Ascending aorta (tissue), 2 donors: ENCODE measurements at regions of chr4 and their contacts with region 1.

Region 1: DNA sequence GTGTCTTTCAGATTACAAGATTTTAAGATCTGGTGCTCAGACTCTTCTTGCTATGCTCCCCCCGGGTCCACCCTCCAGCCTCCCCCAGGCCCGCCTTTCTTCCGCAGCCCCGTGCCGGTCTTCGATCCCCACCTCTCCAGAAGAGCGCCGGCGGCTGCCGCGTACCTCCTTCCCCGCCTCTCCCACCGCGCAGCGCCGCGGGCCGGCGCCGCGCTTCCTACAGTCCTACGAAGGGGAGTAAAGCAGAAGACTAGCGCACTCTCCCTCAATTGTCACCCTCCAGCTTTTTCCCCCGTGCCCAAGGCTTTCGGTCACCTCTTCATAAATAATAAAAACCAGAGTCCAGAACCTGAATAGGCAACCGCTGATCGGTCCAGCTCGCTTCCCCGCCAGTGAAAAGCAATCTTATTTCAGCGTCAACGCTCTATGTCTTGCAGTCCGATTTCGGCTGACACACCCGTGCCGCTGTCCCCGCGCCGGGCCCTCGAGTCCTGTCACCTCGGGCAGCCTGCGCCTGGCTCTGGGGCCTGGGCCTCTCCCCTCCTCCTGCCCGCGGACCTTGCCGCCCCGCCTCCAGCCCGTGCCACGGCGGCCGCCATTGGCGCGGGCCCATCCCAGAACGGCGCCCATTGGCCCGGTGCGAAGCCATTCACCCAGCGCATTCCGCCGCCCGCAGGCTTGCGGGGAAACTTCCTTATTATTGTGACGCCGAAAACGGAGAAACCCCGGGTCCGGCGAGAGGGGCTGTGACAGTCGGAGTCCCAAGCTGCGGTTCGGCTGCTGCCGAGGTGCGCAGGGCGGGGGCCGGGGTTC is at the start of gene HERC3:
- DNase-seq: peak; percentile 70 to 96
- H3K4me3 ChIP-seq: peak within 1 kb of the TSS; percentile 88 to 95
- H3K27ac ChIP-seq: peak within 1 kb of the TSS; percentile 93 to 96
- H3K4me1 ChIP-seq: peaks cover 2 to 12% of the 10 kb centered on the region in 2 donors
- H3K27me3 ChIP-seq: no peaks in the 10 kb centered on the region
- CTCF ChIP-seq: no peak
- total RNA-seq, gene HERC3: 16.2 TPM

Region 2: GRCh38 chr4:88456757-88457306 is 135.2 kb before region 1 on chr4 and contains the start of gene HERC5:
- intact Hi-C with region 1: loop called (anchors 5 kb)
- DNase-seq: peak; percentile 83 to 97
- H3K4me3 ChIP-seq: peak within 1 kb of the TSS; percentile 68 to 99
- H3K27ac ChIP-seq: peak within 1 kb of the TSS; percentile 83 to 98
- H3K4me1 ChIP-seq: peaks cover 3 to 12% of the 10 kb centered on the region in 2 donors
- H3K27me3 ChIP-seq: no peaks in the 10 kb centered on the region
- CTCF ChIP-seq: peak; percentile 54 to 76 (median 72)
- total RNA-seq, gene HERC5: 0.32 TPM

Region 3: DNA sequence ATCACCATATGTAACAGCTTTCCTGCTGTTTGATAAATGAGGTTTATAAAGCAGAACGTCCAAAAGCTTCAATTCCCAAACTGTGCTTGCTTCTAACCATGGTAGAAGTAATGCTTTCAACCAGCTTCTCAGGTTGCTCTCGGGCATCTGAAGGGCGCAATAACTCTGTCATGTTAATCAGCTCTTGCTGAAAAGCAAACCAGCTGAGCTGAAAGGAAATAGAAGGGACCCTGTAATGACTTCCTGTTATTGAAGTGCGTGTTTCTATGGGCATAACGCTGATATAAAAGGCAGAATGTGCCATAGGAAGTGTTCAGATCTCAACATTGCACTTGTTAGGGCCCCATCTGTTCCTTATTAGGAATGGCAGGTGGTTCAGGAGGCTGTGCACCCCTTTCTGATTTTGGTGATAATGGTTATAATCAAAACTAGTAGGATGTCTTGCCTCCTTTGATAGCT is 21.5 kb after region 1 on chr4:
- intact Hi-C with region 1: loop called (anchors 1 kb)
- DNase-seq: no peak
- H3K4me3 ChIP-seq: no peak overlapping the region
- H3K27ac ChIP-seq: peak overlapping the region; percentile 72 to 78
- H3K4me1 ChIP-seq: peaks cover 15 to 35% of the 10 kb centered on the region in 2 donors
- H3K27me3 ChIP-seq: no peaks in the 10 kb centered on the region
- CTCF ChIP-seq: no peak

Region 4: DNA sequence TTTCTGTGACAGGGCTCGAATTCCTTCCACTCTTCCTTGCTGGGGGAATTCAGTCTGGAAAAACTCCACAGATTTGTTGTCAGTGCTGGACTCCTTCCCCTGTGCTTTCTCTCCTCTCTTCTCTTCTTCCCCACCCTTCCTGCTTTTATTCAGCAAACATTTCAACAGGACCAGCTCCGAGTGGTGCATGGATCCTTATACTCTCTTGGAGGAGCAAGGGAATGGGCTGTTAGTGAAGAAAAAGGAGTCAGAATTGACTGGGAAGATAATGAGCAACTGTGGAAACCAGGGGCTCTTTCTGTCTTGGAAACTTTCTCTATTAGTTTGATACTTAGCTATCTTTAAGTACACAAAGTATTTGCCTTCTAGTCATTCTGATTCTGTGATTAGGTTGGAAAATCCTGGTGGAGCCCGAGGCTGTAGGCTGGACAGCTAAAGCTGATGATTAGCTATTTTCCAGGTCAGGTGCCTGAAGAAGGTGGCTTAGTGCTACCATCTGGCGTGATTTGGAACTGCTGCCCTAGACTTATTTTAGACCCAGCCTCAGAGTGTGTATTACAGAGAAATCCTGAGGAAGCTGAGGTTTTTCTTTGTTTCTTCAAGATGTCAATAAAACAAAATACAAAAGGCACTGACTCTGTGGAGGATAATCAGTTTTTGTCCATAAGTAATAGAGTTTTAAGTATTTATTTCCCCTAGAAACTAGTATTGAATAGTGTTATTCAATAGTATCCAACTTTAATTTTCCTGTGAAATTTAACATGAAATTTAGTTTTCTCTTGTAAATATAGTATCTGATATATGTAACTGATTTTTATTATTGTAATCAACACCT is 67.3 kb after region 1 on chr4:
- intact Hi-C with region 1: loop called (anchors 1 kb)
- DNase-seq: peak in 1 of 2 donors; percentile 78
- H3K4me3 ChIP-seq: no peak overlapping the region
- H3K27ac ChIP-seq: peak overlapping the region; percentile 32 to 61
- H3K4me1 ChIP-seq: peaks cover 0 to 14% of the 10 kb centered on the region in 2 donors
- H3K27me3 ChIP-seq: no peaks in the 10 kb centered on the region
- CTCF ChIP-seq: peak; percentile 61 to 90 (median 90)

Region 5: DNA sequence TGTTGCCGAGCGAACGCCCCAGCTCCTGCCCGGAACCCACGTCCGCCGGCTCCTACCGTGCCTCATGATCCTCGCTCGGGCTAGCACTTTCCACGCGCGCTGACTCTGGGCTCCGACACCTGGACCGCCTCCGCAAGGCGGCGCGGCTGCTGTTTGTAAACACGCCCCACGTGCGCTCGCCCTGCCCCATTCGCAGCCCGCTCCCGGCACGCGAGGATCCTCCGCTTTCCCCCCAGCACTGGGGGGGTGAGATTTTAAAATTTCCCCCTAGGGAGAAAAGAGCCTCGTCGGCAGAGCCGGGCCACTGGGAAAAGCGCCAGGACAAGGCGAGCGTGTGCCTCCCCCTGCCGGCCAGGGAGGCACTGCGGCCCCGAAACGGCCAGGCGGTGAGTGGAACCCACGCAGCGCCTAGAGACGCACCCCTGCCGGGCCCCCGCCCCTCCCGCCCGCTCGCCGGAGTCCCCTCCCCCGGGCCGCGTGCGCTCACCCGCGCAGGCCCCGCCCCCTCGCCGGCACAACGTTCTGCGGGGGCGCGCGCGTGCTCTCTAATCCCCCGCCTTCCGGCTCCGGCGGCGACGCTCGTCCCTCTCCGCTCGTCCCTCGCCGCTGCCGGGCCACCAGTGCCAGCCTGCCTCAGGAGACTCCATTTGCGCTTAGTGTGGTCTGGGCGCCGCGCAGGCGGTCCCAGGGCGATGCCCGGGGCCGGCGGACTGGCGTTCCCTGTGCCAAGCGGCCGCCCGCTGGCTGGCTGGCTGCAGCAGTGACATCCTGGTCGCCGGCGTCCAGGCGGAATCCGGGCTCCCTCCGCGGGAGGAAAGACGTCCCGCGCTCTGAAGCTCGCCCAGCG is 519.2 kb after region 1 on chr4 and contains the start of gene TIGD2:
- intact Hi-C with region 1: loop called (anchors 2 kb)
- DNase-seq: peak; percentile 29 to 91
- H3K4me3 ChIP-seq: peak within 1 kb of the TSS; percentile 68 to 79
- H3K27ac ChIP-seq: peak within 1 kb of the TSS; percentile 77 to 81
- H3K4me1 ChIP-seq: peaks cover 3 to 4% of the 10 kb centered on the region in 2 donors
- H3K27me3 ChIP-seq: no peaks in the 10 kb centered on the region
- CTCF ChIP-seq: peak; percentile 79 to 86 (median 82)
- total RNA-seq, gene TIGD2: 0.21 TPM

Region 6: GRCh38 chr4:89172860-89173259 is 580.9 kb after region 1 on chr4:
- intact Hi-C with region 1: no loop called
- DNase-seq: no peak
- H3K4me3 ChIP-seq: no peak overlapping the region
- H3K27ac ChIP-seq: no peak overlapping the region
- H3K4me1 ChIP-seq: no peaks in the 10 kb centered on the region
- H3K27me3 ChIP-seq: no peaks in the 10 kb centered on the region
- CTCF ChIP-seq: no peak